Body of pancreas (tissue), 4 donors: ENCODE measurements at regions of chr3 and their contacts with region 1.

Region 1: GRCh38 chr3:45760878-45761711 is 35.2 kb downstream of the SLC6A20 start:
- DNase-seq: peak; percentile 56 to 74 (median 64)
- ATAC-seq: peak; percentile 89
- H3K4me3 ChIP-seq: no peak overlapping the region
- H3K27ac ChIP-seq: no peak overlapping the region
- H3K4me1 ChIP-seq: peaks cover 14% of the 10 kb centered on the region
- H3K27me3 ChIP-seq: no peaks in the 10 kb centered on the region
- CTCF ChIP-seq: peak; percentile 67 to 81 (median 79)
- POLR2A ChIP-seq: no peak

Region 2: DNA sequence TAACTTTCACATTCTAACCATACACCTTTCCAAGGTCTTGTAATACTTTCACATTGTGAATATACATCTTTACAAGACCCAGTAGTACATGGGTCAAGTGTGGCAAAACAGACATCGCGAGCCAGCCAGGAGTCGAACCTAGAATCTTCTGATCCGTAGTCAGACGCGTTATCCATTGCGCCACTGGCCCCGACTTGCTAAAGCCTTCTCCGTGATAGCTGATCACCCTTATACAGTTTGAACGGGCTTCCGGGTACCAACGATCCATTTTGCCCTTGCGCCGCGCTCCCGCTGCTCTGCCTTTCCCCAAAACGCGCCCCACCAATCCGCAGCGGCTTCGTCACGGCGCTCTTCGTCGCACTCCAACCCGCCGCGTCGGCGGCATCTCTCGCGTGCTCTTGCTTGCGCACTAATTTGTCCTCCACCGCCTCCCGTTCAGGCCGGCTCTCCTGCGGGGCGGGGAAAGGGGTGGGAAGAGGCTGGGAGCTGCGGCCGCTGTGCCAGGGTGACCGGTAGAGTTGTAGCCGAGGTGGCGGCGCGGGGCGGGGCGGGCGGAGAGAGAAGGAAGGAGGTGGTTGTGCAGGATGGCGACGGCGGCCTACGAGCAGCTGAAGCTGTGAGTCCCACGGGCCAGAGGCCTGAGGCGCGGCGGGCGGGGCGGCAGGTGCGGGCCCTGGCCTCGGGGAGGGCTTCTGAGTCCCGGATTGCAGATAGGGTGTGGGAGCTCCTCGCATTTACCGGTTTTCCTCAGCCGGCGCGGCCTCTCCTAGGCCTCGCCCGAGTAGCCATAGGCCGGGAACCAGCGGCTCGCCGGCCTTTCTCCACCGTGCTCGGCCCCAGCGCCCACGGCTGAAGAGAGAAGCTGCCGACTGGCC is 72.0 kb before region 1 on chr3 and contains the start of gene SACM1L:
- intact Hi-C with region 1: no loop called
- DNase-seq: peak; percentile 97 to 98 (median 98)
- ATAC-seq: peak; percentile 95
- H3K4me3 ChIP-seq: peak within 1 kb of the TSS; percentile 24 to 74
- H3K27ac ChIP-seq: peak within 1 kb of the TSS; percentile 78 to 93 (median 86)
- H3K4me1 ChIP-seq: peaks cover 44% of the 10 kb centered on the region
- H3K27me3 ChIP-seq: no peaks in the 10 kb centered on the region
- CTCF ChIP-seq: no peak
- POLR2A ChIP-seq: peak; percentile 66 to 92 (median 87)
- total RNA-seq, gene SACM1L: 25.1 to 49.5 TPM

Region 3: DNA sequence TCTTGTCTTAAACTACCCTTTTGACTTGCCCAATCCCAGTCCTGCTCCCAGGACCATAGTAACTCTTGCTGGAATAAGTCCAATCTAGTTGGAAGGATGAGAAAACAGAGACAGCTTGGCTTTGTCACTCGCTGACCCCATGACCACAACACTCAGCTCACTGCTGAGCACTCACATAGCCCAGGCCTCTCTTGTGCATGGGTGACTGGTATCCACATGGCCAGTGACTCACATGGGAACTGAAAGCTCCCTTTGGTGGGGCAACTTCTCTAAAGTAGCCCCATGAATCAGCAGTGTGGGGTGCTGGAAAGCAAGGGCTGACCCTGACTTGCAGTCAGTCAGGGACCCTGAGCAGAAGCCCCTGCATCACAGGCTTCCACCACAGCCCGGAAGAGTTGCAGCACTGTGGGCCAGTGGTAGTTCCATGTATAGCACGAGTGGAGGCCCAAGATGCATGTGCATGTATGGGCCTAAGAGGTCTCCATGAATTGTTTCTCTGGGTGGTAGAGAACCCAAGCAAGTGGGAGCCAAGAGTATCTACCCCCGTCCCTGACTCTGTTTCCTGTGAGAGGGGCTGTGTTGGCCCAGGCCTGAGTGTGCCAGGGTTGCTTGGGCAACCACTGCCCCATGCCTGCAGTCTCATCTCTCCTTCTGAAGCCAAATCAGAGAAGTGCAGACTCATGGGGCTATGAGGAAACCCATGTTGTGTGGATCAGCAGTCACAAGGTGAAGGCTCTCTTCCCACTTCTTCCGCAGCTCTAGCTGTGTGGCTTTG is 328.3 kb after region 1 on chr3:
- intact Hi-C with region 1: loop called (anchors 10 kb)
- DNase-seq: peak; percentile 27 to 84 (median 36)
- ATAC-seq: peak; percentile 57
- H3K4me3 ChIP-seq: no peak overlapping the region
- H3K27ac ChIP-seq: peak overlapping the region in 1 of 4 donors; percentile 58
- H3K4me1 ChIP-seq: no peaks in the 10 kb centered on the region
- H3K27me3 ChIP-seq: no peaks in the 10 kb centered on the region
- CTCF ChIP-seq: no peak
- POLR2A ChIP-seq: no peak